ENCODE measurements at regions of chr12 and their contacts with region 1.

Region 1: DNA sequence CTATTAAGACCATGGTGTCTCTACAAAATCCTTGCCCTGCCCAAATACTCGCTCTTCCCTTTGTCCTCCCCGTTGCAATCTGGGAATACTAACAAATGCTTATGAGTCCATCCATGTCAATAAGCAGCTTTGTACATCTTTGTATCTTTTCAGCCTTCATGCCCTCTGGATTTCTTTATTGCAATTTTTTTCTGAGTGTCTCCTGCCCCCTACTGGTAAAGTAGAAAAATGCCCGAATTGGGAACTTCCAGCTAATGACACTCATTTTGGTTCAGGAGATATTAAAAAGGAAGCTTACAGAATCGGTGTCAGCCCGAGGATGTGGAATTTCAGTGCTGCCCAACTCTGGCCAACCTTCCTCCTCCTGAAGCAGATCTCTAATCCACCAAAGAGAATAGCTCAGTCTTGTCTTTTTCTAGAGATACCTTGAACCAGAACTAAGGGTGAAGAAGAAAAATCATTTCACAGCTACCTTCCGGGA is 46.0 kb downstream of the SH2B3 start:
- DNase-seq: peak in 2 of 5 donors; percentile 66 to 71
- H3K4me3 ChIP-seq: no peak overlapping the region
- H3K4me3 Mint-ChIP-seq: no peak overlapping the region
- H3K27ac ChIP-seq: no peak overlapping the region
- H3K27ac Mint-ChIP-seq: peak overlapping the region; percentile 12 to 98 (median 80)
- H3K4me1 ChIP-seq: peaks cover 17% of the 10 kb centered on the region
- H3K4me1 Mint-ChIP-seq: peaks cover 40 to 50% (median 42%) of the 10 kb centered on the region in 3 donors
- H3K27me3 ChIP-seq: no peaks in the 10 kb centered on the region
- H3K27me3 Mint-ChIP-seq: peaks cover 0 to 2% of the 10 kb centered on the region in 2 donors

Region 2: DNA sequence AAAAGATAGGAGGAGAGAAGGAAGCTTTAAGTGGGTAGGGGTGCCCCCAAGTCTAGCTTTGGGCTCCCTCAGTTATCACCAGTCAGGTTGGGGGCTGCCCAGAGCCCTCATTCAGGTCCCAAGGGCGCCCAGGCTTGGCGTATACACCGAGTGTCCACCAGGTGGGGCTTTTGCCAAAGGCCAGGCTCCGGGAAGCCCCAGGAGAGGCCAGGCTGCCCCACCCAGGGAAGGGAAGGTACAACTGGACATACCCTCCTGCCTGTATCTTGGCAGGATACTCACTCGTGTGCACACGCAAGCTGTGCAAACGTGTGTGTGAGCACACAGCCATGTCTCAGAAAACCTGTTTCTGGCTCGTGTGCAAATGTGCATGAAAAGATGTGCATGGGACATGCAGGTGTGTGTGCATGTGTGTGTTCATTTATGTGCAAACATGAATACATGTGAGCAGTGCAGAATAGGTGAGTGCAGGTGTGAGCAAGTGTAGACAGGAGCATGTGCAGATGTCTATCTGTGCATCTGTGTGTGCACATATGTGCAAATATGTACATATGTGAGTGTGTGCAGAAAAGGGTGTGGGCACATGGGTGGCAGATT is 427.4 kb before region 1 on chr12:
- CTCF ChIA-PET with region 1: no interaction called
- POLR2A ChIA-PET with region 1: no interaction called
- DNase-seq: peak; percentile 12 to 56 (median 27)
- H3K4me3 ChIP-seq: no peak overlapping the region
- H3K4me3 Mint-ChIP-seq: no peak overlapping the region
- H3K27ac ChIP-seq: no peak overlapping the region
- H3K27ac Mint-ChIP-seq: peak overlapping the region in 1 of 8 donors; percentile 46
- H3K4me1 ChIP-seq: no peaks in the 10 kb centered on the region
- H3K4me1 Mint-ChIP-seq: peaks cover 2 to 3% (median 3%) of the 10 kb centered on the region in 3 donors
- H3K27me3 ChIP-seq: no peaks in the 10 kb centered on the region
- H3K27me3 Mint-ChIP-seq: peaks cover 20 to 68% of the 10 kb centered on the region in 2 donors

Region 3: GRCh38 chr12:111154147-111154834 is 297.4 kb before region 1 on chr12:
- CTCF ChIA-PET with region 1: no interaction called
- POLR2A ChIA-PET with region 1: no interaction called
- DNase-seq: no peak
- H3K4me3 ChIP-seq: no peak overlapping the region
- H3K4me3 Mint-ChIP-seq: no peak overlapping the region
- H3K27ac ChIP-seq: no peak overlapping the region
- H3K27ac Mint-ChIP-seq: no peak overlapping the region
- H3K4me1 ChIP-seq: no peaks in the 10 kb centered on the region
- H3K4me1 Mint-ChIP-seq: no peaks in the 10 kb centered on the region
- H3K27me3 ChIP-seq: peaks cover 6% of the 10 kb centered on the region
- H3K27me3 Mint-ChIP-seq: peaks cover 10 to 39% of the 10 kb centered on the region in 2 donors

Region 4: DNA sequence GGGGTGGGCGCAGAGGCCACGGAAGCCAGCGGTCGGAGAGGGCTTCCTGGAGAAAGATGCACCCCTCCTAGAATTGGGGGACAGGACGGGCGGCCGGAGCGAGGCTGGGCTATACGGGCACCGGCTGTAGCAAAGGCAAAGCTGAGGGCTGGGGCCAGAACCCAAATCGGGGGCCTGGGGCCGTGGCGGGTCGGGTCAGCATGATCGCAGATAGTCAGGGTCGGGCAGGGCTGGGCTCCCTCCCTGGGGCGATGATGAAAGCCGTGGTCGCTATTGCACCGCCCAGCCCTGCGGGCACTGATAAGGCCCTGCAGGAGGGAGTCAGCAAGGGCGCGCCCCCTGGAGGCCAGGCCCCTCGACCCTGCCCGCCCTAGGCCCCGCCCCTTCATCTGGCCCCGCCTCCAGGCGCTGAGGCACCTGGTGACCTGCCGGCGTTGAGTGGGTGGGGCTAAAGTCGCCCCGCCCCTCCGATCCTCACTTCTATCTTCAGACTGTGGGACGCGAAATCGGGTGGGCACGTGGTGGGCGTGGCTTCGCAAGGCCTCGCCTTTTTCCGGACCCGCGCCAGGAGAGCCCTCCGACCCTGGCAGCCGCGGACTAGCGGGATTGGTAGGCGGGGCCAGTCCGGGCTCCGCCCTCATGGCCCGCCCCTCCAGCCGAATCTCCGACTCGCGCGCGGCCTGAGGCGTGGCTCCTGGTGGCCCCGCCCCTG is 46.4 kb before region 1 on chr12:
- CTCF ChIA-PET with region 1: interaction called, 1,032 read pairs
- POLR2A ChIA-PET with region 1: interaction called, 18 read pairs
- DNase-seq: peak; percentile 98 to 99 (median 99)
- H3K4me3 ChIP-seq: peak overlapping the region; percentile 56
- H3K4me3 Mint-ChIP-seq: peak overlapping the region; percentile 78 to 96 (median 87)
- H3K27ac ChIP-seq: peak overlapping the region; percentile 92
- H3K27ac Mint-ChIP-seq: peak overlapping the region; percentile 85 to 97 (median 92)
- H3K4me1 ChIP-seq: peaks cover 62% of the 10 kb centered on the region
- H3K4me1 Mint-ChIP-seq: peaks cover 45 to 67% (median 52%) of the 10 kb centered on the region in 3 donors
- H3K27me3 ChIP-seq: no peaks in the 10 kb centered on the region
- H3K27me3 Mint-ChIP-seq: no peaks in the 10 kb centered on the region

Region 5: GRCh38 chr12:111417784-111418593 is 33.7 kb before region 1 on chr12:
- CTCF ChIA-PET with region 1: interaction called, 1,032 read pairs
- POLR2A ChIA-PET with region 1: no interaction called
- DNase-seq: no peak
- H3K4me3 ChIP-seq: no peak overlapping the region
- H3K4me3 Mint-ChIP-seq: no peak overlapping the region
- H3K27ac ChIP-seq: no peak overlapping the region
- H3K27ac Mint-ChIP-seq: peak overlapping the region in 3 of 8 donors; percentile 23 to 73 (median 42)
- H3K4me1 ChIP-seq: peaks cover 20% of the 10 kb centered on the region
- H3K4me1 Mint-ChIP-seq: peaks cover 37 to 56% (median 38%) of the 10 kb centered on the region in 3 donors
- H3K27me3 ChIP-seq: no peaks in the 10 kb centered on the region
- H3K27me3 Mint-ChIP-seq: no peaks in the 10 kb centered on the region

Region 6: DNA sequence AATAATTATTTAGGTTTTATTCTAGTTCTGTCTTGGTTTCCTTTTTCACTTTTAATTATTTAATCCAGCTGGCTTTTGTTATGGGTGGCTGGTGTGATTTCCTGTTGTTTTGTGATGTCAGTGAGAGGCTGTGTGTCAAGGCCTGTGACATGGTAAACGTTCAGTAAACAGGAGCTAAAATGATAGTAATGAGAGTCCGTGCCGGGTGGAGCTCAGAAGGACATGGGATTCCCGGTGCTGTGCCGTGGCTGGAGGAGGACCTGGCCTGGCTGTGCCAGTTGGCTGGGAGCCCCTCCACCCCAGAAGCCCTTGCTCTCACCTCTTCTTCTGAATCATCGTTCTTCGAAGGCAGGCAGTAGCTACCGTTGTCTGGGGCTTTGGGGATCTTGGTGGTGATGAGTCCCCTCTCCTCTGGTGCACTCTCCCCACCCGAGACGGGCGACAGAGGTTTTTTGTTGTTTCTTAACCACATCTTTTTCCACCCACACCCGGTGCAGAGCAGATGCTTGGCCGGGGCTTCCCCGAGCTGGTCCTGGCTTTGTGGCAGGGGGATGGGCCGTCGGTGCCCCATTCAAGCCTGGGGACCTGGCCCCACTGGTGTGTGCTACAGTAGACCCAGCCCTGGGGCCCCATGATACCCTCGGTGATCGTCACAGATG is 16.9 kb before region 1 on chr12:
- CTCF ChIA-PET with region 1: interaction called, 218 read pairs
- POLR2A ChIA-PET with region 1: interaction called, 14 read pairs
- DNase-seq: peak; percentile 80 to 95 (median 89)
- H3K4me3 ChIP-seq: peak overlapping the region; percentile 49
- H3K4me3 Mint-ChIP-seq: peak overlapping the region; percentile 74 to 92 (median 87)
- H3K27ac ChIP-seq: peak overlapping the region; percentile 98
- H3K27ac Mint-ChIP-seq: peak overlapping the region; percentile 99 to 100 (median 100)
- H3K4me1 ChIP-seq: peaks cover 97% of the 10 kb centered on the region
- H3K4me1 Mint-ChIP-seq: peaks cover 85 to 98% (median 89%) of the 10 kb centered on the region in 3 donors
- H3K27me3 ChIP-seq: no peaks in the 10 kb centered on the region
- H3K27me3 Mint-ChIP-seq: peaks cover 0 to 3% of the 10 kb centered on the region in 2 donors

Region 7: GRCh38 chr12:111462210-111462769 is 10.6 kb after region 1 on chr12:
- CTCF ChIA-PET with region 1: interaction called, 13 read pairs
- POLR2A ChIA-PET with region 1: no interaction called
- DNase-seq: no peak
- H3K4me3 ChIP-seq: no peak overlapping the region
- H3K4me3 Mint-ChIP-seq: no peak overlapping the region
- H3K27ac ChIP-seq: no peak overlapping the region
- H3K27ac Mint-ChIP-seq: peak overlapping the region in 1 of 8 donors; percentile 34
- H3K4me1 ChIP-seq: no peaks in the 10 kb centered on the region
- H3K4me1 Mint-ChIP-seq: peaks cover 0 to 4% (median 0%) of the 10 kb centered on the region in 3 donors
- H3K27me3 ChIP-seq: no peaks in the 10 kb centered on the region
- H3K27me3 Mint-ChIP-seq: no peaks in the 10 kb centered on the region

Region 8: DNA sequence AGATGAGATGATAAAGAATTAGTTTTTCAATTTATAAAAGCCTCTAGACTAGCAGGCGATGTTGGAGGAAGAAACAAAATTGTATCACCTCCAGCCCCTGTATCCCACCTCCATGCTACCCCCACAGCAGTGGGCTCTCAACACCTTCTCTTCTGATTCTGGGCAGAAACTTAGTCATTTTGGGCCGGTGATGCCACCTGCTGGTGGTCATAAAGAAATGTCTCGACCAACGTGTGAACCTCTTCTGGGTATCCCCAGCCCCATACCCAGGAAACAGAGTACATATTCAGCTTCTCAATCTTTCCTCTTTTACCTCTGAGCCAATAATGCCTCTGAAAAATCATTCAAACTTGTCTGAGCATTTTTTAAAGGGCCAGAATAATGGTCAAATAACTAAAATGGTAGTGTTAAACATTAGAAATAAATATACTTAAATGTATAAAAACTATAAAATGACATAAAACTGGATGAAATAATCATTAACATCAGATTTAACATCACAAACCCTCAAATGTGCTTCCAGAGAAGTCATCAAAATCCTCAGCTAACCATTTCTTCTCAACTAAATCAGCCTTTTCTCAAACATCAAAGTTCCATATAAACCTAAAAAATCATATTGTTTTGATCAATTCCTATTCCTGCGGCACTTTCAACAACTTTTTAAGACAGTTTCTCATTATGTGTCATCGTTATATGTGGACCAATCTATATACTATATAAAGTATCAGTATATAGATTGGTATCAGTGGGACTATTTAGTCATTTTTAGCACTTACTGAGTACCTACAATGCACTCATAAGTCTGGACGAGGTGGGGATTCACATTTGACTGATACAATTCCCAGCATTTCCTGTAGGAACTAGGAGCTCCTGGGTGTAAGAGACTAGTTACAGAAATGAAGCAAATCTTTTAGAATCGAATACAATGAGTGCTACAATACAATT is 78.0 kb after region 1 on chr12:
- CTCF ChIA-PET with region 1: interaction called, 31 read pairs
- POLR2A ChIA-PET with region 1: interaction called, 3 read pairs
- DNase-seq: peak; percentile 37 to 75 (median 43)
- H3K4me3 ChIP-seq: no peak overlapping the region
- H3K4me3 Mint-ChIP-seq: no peak overlapping the region
- H3K27ac ChIP-seq: no peak overlapping the region
- H3K27ac Mint-ChIP-seq: peak overlapping the region in 5 of 8 donors; percentile 11 to 45 (median 44)
- H3K4me1 ChIP-seq: no peaks in the 10 kb centered on the region
- H3K4me1 Mint-ChIP-seq: peaks cover 0 to 7% (median 1%) of the 10 kb centered on the region in 3 donors
- H3K27me3 ChIP-seq: no peaks in the 10 kb centered on the region
- H3K27me3 Mint-ChIP-seq: no peaks in the 10 kb centered on the region